ENCODE measurements at regions of chr5 and their contacts with region 1.

Region 1: DNA sequence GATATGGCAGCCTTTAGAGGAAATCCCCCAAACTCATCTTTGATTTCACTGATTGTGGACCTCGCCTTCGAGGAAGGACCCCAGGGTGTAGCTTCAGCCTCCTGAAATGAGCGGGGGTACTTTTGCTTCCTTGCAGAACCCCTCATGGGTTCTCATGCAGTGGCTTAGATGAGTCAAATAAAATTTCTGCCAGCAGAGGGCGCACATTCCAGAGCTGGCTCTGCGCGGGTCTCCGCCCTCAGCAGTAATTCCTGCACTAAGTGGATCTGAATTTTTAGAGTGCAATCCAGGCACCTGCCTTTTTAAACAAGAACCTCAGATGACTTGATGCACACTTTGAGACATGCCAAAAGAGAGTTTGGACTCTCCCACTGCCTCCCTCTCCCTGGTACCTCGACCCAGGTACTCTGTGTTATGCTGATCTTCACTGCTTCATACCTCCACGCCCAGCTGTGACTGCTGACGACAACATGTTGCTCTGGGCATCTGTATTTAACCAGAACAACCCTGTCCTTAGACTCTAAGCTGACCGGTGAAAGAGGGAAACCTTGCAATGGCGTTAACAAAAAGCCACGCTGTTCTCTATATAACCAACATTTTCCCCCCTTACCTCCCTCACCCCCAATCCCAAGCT is 7.3 kb downstream of the EGFLAM start:
- DNase-seq: no peak
- H3K4me3 ChIP-seq: no peak overlapping the region
- CTCF ChIP-seq: peak; percentile 58

Region 2: DNA sequence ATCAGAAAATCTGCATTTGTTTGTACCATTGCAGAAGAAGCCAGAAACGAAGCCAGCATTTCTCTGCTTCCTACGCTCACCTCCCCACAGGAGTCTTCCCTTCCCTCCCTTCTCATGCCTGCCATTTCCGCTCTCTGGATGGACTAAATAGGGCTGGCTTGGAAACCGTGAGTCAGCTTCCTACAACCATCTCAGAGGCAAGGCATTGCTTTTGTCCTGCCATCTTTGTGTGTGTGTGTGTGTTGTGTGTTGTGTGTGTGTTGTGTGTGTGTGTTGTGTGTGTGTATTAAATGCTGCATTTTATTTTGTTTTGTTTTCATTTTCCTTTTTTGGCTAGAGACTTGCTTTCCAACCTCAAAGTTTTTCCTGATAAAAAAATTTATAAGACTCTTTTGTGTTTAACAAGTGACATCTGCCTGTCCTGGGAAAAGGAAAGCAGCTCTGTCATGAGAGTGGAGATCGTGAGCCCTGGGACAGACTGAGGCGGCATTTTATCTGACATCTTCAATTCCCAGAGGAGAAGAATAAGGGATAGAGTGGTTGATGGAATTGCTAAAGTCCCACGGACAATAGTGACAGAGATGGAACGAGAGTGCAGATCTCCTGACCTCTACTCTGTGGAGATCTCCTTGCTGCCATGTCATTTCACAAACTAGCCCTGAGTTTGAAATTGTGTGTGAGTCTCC is 14.8 kb before region 1 on chr5:
- CTCF ChIA-PET with region 1: interaction called, 22 read pairs
- POLR2A ChIA-PET with region 1: no interaction called
- DNase-seq: no peak
- H3K4me3 ChIP-seq: no peak overlapping the region
- CTCF ChIP-seq: no peak

Region 3: DNA sequence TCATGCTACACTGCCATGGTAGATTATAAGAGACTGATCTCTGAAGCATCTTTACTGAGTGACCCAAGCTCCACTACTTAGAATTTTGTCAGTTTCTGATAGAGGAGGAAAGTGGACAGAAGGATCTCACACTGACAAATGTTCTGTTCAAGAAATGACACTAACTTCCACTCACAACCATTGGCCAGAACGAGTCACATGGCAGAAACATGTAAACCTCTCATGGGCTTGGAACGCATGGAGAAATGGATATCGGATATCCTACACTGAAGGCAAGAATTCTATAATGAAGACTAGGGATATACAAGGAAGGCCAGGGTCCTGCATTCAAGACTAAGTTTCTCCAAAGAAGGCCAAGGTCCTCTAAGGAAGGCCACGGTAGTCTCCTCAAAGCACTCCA is 23.8 kb after region 1 on chr5:
- CTCF ChIA-PET with region 1: interaction called, 15 read pairs
- POLR2A ChIA-PET with region 1: no interaction called
- DNase-seq: no peak
- H3K4me3 ChIP-seq: no peak overlapping the region
- CTCF ChIP-seq: no peak

Region 4: DNA sequence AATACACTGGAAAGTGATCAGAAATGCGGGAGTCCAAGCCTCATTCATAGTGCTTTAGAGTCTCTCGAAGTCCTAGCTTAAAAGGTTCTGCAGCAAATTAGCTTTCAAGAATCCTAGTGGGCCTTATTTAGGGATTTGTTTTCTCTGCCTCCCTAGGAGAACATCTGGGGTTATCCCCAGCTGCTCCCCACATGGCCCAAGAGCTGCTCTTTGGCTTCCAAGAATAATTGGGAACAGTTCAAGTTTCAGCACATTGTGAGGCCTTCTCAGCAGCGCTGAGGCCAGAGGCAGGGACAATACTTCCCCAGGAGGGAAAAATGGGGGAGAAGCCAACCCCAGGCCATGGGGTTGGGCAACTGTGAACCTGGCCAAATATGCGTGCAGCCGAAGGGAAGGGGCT is 182.1 kb after region 1 on chr5:
- CTCF ChIA-PET with region 1: no interaction called
- POLR2A ChIA-PET with region 1: no interaction called
- DNase-seq: no peak
- H3K4me3 ChIP-seq: no peak overlapping the region
- CTCF ChIP-seq: no peak

Measured in AG04449 (cell line).